Sigmoid colon (tissue), 7 donors: ENCODE measurements at regions of chr20 and their contacts with region 1.

Region 1: DNA sequence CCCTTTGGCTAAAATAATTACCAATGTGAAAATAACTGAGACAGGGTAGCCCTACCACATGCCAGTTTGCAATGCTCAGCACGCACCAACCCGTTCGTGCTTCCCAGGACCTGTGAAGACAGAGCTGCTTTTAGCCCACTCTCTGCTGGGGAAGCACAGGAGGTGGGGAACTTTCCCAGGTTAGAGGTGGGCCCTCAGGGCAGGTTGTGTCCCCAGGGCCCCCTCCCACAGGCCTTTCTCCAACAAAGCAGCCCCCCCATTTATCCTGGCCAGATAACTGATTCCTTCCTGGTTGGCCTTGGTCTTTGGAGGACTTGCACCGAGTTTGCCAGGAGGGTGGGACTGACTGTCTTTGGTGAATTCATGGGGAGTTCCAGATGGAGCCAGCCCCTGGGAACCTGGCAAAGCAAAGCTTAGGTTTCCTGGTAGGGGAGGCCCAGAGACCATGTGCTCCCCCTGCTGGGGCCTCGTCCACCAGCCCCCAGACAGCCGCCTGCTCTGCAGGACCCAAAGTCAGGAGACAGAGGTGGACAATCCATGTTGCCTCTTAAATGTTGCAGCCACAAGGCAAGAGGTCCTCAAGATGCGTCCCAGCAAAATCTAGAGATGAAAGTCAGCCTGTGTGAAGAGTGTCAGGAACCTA is 498.0 kb downstream of the PREX1 start:
- DNase-seq: no peak
- H3K4me3 ChIP-seq: no peak overlapping the region
- H3K27ac ChIP-seq: peak overlapping the region in 1 of 4 donors; percentile 10
- H3K4me1 ChIP-seq: peaks cover 0 to 58% (median 48%) of the 10 kb centered on the region in 4 donors
- H3K27me3 ChIP-seq: no peaks in the 10 kb centered on the region
- CTCF ChIP-seq: no peak
- EP300 ChIP-seq: no peak
- POLR2A ChIP-seq: no peak

Region 2: DNA sequence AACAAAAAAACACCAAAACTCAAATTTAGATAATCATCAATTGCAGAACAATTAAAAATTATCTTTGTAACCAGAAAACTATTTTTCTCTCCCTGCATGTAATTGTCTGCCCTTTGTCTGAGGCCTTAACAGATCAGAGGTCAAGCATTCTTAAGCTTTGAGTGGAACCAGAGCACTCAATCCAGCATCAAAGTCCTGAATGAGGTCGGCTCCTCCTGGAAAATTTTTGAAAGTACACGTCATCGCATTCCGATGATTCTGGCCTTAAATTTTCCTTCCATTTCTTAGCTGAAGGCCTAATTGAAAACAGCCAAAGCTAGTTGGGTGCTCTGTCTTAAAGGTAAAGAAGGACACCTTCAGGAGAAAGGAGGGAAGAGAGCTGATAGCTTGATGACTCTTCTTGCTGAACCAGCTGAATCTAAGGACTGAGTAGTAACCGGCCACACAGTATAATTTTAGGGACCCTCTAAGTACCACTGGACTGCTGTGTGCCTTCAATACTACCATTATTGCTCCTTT is 34.3 kb before region 1 on chr20:
- intact Hi-C with region 1: loop called (anchors 5 kb)
- DNase-seq: no peak
- H3K4me3 ChIP-seq: no peak overlapping the region
- H3K27ac ChIP-seq: peak overlapping the region; percentile 60 to 82 (median 72)
- H3K4me1 ChIP-seq: peaks cover 0 to 58% (median 38%) of the 10 kb centered on the region in 4 donors
- H3K27me3 ChIP-seq: no peaks in the 10 kb centered on the region
- CTCF ChIP-seq: no peak
- EP300 ChIP-seq: no peak
- POLR2A ChIP-seq: no peak

Region 3: DNA sequence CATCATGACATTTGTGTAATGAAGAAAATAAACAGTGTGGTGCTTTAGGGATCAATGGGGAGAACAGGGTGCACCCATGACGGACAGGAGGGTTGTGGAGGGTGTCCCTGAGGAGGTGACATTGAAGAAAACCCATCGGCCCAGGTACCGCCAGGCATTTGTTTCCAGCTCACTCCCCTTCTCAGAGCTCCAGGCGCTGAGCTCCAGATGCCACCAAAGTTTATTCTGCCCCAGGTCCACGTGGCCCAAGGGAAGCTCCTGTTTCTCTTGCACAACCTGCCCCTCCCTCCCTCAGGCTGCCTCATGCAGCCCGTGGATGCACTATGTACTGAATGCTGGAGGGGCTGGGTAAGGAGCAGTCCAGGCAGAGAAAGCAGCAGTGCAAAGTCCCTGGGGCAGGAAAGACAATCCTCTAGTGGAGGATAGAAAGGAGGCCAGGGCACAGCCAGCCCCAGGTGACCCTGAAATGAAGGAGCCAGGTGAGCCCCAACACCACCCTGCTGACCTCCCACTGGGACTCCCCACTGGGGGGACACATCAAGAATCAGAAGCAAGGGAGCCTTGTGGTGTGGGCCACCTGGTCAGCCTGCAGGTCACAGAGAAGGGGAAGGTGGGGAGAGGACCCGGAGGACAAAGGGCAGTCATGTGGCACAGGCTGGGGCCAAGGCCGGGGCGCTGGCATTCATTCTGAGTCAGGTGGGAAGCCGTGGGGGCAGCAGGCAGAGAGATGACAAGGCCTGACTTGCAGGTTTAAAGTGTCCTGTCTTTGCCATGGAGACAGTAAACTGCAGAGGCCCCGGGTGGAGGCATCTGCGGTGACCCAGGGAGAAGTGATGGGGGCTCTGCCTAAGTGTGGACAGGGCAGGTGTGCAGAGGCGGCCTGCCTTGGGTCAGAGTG is 267.9 kb after region 1 on chr20:
- intact Hi-C with region 1: loop called (anchors 10 kb)
- DNase-seq: peak; percentile 48
- H3K4me3 ChIP-seq: no peak overlapping the region
- H3K27ac ChIP-seq: no peak overlapping the region
- H3K4me1 ChIP-seq: peaks cover 0 to 14% (median 12%) of the 10 kb centered on the region in 4 donors
- H3K27me3 ChIP-seq: no peaks in the 10 kb centered on the region
- CTCF ChIP-seq: no peak
- EP300 ChIP-seq: no peak
- POLR2A ChIP-seq: no peak